Stomach (tissue), 19 donors: ENCODE measurements at regions of chr6 and their contacts with region 1.

Region 1: DNA sequence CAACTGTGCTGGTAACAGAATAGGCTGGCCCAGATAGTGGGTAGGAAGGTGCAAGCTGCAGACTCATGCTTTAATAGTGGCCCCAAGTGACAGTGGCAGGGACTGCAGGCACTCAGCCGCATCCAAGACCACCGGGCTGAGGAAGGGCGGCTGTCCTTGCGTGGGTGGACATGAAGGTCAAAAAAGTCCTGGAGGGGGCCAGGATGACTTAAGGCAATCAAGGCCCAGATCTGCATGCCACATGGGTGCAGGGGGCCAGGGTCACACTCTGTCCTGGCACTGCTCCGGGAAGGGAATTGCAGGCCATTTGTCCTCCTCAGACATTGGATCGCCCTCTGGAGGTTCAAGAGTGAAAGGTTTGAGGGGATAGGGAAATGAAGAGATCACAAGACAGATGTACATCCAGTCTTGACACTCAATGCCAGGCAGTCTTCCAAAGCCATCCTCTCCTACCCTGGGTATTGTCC is 10.4 kb upstream of the VNN2 start:
- DNase-seq: peak; percentile 52 to 70
- H3K4me3 ChIP-seq: no peak overlapping the region
- H3K27ac ChIP-seq: peak overlapping the region in 1 of 5 donors; percentile 11
- H3K4me1 ChIP-seq: peaks cover 6 to 32% (median 10%) of the 10 kb centered on the region in 4 donors
- H3K27me3 ChIP-seq: no peaks in the 10 kb centered on the region
- CTCF ChIP-seq: peak in 5 of 7 experiments; percentile 34 to 95 (median 72)
- EP300 ChIP-seq: no peak
- POLR2A ChIP-seq: no peak

Region 2: GRCh38 chr6:132527791-132528190 is 240.3 kb before region 1 on chr6:
- intact Hi-C with region 1: loop called (anchors 10 kb)
- DNase-seq: no peak
- H3K4me3 ChIP-seq: no peak overlapping the region
- H3K27ac ChIP-seq: no peak overlapping the region
- H3K4me1 ChIP-seq: peaks cover 0 to 4% (median 2%) of the 10 kb centered on the region in 4 donors
- H3K27me3 ChIP-seq: no peaks in the 10 kb centered on the region
- CTCF ChIP-seq: no peak
- EP300 ChIP-seq: no peak
- POLR2A ChIP-seq: no peak

Region 3: DNA sequence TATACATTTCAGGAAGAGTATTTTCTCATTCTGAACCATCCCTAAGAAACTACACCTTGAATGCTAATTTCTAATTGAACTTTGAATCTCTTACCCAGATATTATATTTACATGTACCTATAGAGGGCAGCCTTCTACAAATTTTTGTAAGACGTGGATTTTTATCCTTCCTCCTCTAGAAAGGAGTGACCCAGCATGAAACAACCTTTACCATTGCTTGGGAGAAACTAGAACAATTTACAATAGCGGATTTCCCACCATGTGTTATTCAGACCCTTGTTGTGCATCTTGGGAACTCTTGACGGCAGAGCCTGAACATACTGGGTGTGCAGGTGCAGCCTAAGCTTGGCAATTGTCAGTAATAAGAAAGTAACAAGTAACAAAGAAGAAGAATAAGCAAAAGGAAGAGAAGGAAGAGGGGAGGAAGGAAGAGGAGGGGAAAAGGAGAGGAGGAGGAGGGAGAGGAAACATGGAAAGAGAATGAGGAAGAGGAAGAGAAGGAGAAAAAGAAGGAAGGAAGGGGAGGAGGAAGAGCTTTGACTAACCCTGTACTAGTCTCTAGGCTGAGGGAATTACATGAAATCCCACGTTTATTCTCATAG is 98.3 kb before region 1 on chr6:
- intact Hi-C with region 1: loop called (anchors 10 kb)
- DNase-seq: peak in 1 of 2 donors; percentile 64
- H3K4me3 ChIP-seq: no peak overlapping the region
- H3K27ac ChIP-seq: no peak overlapping the region
- H3K4me1 ChIP-seq: peaks cover 3 to 21% (median 9%) of the 10 kb centered on the region in 4 donors
- H3K27me3 ChIP-seq: no peaks in the 10 kb centered on the region
- CTCF ChIP-seq: peak in 5 of 7 experiments; percentile 17 to 61 (median 57)
- EP300 ChIP-seq: no peak
- POLR2A ChIP-seq: no peak

Region 4: GRCh38 chr6:132843316-132844043 is 75.4 kb after region 1 on chr6:
- intact Hi-C with region 1: no loop called
- DNase-seq: no peak
- H3K4me3 ChIP-seq: no peak overlapping the region
- H3K27ac ChIP-seq: no peak overlapping the region
- H3K4me1 ChIP-seq: no peaks in the 10 kb centered on the region
- H3K27me3 ChIP-seq: no peaks in the 10 kb centered on the region
- CTCF ChIP-seq: no peak
- EP300 ChIP-seq: no peak
- POLR2A ChIP-seq: no peak